Calu3 (cell line): ENCODE measurements at regions of chr6 and their contacts with region 1.

Region 1: GRCh38 chr6:52352239-52353008 is 9.5 kb upstream of the PAQR8 start:
- DNase-seq: peak; percentile 70
- H3K4me3 Mint-ChIP-seq: peak overlapping the region; percentile 15
- H3K27ac Mint-ChIP-seq: peak overlapping the region; percentile 91
- H3K4me1 Mint-ChIP-seq: peaks cover 45% of the 10 kb centered on the region
- H3K27me3 Mint-ChIP-seq: no peaks in the 10 kb centered on the region
- CTCF ChIP-seq: no peak

Region 2: DNA sequence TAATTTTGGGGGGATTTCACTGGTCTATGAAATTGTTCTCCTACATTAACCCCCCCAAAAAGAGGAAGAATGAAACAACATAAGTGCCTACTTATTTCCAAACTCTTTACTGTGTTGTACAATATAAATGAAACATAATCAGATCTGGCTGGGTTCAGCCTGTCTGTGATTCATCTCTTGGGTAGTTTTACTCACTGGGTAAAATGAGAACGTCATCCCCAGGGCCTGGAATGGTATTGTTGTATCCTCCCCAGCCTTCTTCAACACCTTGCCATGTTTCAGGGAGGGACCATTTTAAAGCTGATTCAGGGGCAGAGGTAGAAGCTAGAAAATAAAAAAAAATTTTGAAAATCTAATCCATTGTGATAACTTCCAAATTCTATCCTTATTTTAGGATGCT is 521.8 kb before region 1 on chr6:
- CTCF ChIA-PET with region 1: no interaction called
- intact Hi-C with region 1: no loop called
- DNase-seq: no peak
- H3K4me3 Mint-ChIP-seq: no peak overlapping the region
- H3K27ac Mint-ChIP-seq: no peak overlapping the region
- H3K4me1 Mint-ChIP-seq: no peaks in the 10 kb centered on the region
- H3K27me3 Mint-ChIP-seq: no peaks in the 10 kb centered on the region
- CTCF ChIP-seq: no peak

Region 3: DNA sequence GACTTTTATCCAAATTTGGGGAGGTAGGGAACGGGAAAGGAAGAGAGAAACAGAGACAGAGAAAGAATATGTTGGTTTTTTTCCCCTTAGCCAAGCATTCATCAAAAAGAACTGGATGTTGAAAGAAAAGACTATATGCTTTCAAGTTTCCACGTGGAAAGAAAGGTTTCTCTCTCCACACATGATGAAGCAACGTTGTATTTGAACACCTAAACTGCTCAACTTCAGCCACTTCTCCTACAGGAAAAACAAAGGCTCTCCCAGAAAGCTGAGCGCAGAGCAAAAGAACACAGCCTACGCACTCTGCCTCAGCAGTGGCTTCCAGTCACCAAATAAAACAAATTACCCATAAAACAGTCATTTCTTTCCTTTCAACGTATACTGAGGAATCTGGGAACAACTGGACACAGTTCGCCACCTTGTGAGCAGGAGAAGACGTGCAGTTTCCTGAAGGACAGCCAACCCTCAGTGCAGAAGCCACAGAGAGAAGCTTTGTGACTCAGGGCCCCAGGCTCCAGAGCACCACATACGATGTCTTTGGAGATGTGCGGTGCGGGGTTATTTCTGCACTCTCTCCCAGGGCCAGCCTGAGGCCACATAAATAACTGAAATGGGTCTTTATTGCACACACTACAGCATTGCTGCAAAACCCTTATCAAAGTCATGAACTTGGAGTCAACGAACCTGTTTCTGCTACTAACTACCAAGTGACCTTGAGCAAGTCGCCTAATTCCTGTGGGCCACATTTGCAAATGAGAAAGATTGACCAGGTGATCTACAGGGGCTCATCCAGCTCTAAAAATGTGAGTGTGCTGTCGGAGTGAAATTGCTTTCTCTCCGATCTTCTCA is 118.2 kb before region 1 on chr6:
- CTCF ChIA-PET with region 1: no interaction called
- intact Hi-C with region 1: no loop called
- DNase-seq: peak; percentile 61
- H3K4me3 Mint-ChIP-seq: no peak overlapping the region
- H3K27ac Mint-ChIP-seq: no peak overlapping the region
- H3K4me1 Mint-ChIP-seq: peaks cover 7% of the 10 kb centered on the region
- H3K27me3 Mint-ChIP-seq: peaks cover 49% of the 10 kb centered on the region
- CTCF ChIP-seq: peak; percentile 64

Region 4: GRCh38 chr6:52399511-52400312 is 47.3 kb after region 1 on chr6:
- CTCF ChIA-PET with region 1: interaction called, 11 read pairs
- intact Hi-C with region 1: no loop called
- DNase-seq: peak; percentile 45
- H3K4me3 Mint-ChIP-seq: no peak overlapping the region
- H3K27ac Mint-ChIP-seq: no peak overlapping the region
- H3K4me1 Mint-ChIP-seq: peaks cover 36% of the 10 kb centered on the region
- H3K27me3 Mint-ChIP-seq: no peaks in the 10 kb centered on the region
- CTCF ChIP-seq: peak; percentile 71